Head of caudate nucleus (tissue), 42 donors: ENCODE measurements at regions of chr11 and their contacts with region 1.

Region 1: DNA sequence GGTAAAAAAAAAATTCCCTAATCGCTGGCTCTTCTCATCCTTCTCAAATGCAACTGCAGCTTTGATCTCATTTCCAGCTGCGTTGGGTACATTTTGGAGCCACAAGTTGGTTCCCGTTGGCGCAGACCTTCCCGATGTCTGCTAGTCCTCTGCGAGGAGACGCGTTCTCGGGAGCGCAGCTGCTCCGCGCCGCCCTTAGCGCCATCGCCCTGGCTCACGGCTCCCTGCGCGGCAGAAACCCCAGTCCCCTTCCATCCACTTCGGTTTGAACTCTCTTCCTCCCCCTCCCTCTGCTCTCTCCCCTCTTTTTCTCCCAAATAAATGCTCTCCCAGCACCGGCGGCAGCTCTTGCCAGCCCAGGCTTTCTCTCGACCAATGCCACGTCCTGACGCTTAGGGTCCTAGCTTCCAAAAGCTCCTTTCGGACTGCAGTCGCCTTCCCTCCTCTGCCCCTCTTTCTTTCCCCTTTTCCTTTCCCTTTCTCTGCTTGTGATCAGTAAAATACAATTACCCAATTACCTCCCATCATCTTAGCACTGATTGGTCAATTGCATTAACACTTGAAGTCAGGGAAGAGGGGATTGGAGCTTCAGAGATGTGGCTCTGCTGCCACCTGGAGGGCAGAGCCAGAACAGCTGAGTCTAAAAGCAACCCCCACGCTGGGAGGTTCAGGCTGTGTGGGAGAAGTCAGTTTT is 1165.7 kb downstream of the LRRC4C start:
- DNase-seq: peak; percentile 73 to 93 (median 86)

Region 2: GRCh38 chr11:40130427-40130826 is 163.4 kb before region 1 on chr11:
- intact Hi-C with region 1: loop called (anchors 2 kb)
- DNase-seq: peak in 36 of 42 donors; percentile 8 to 78 (median 45)

Region 3: GRCh38 chr11:40186437-40187266 is 107.2 kb before region 1 on chr11:
- intact Hi-C with region 1: loop called (anchors 5 kb)
- DNase-seq: peak; percentile 18 to 85 (median 60)